A549 (cell line): ENCODE measurements at regions of chr7 and their contacts with region 1.

Region 1: DNA sequence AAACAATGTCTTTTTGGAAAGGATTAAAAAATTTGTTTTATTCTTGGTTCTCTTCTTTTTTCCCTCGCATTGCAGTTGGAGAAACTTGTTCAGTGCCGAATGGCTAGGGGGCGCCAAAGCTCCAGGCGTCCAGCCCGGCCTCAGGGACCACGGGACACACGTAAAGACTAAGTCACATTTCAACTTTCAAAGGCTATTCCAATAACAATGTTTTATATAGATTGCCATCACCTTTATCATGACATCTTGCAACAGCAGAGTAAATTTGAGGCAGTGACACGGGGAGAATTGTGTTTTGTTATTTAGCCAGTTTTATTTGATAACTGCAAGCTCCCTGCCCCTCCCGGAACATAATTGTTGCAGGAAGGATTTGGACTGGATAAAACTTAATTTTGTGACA is 2.2 kb upstream of the IGFBP3 start:
- DNase-seq: peak in 1 of 2 experiments; percentile 81
- ATAC-seq: peak in 1 of 2 experiments; percentile 64; a peak in 3 of 6 replicates
- H3K4me3 ChIP-seq: peak overlapping the region; percentile 66; the same call in 2 of the 3 replicates
- H3K27ac ChIP-seq: peak overlapping the region; percentile 77 to 92
- H3K4me1 ChIP-seq: peaks cover 49% of the 10 kb centered on the region
- CTCF ChIP-seq: peak; percentile 95
- EP300 ChIP-seq: no peak
- POLR2A ChIP-seq: no peak
- RAD21 ChIP-seq: peak; percentile 99

Region 2: GRCh38 chr7:45863715-45864114 is 59.6 kb before region 1 on chr7:
- CTCF ChIA-PET with region 1: no interaction called
- POLR2A ChIA-PET with region 1: no interaction called
- DNase-seq: no peak
- ATAC-seq: peak; percentile 68 to 81; a peak in 4 of 6 replicates
- H3K4me3 ChIP-seq: no peak overlapping the region
- H3K27ac ChIP-seq: no peak overlapping the region
- H3K4me1 ChIP-seq: no peaks in the 10 kb centered on the region; the same call in 2 of the 3 replicates
- CTCF ChIP-seq: no peak
- EP300 ChIP-seq: no peak
- POLR2A ChIP-seq: no peak
- RAD21 ChIP-seq: peak in 1 of 2 experiments; percentile 12; a peak in 1 of 5 replicates

Region 3: GRCh38 chr7:45890902-45891461 is 32.3 kb before region 1 on chr7:
- CTCF ChIA-PET with region 1: interaction called, 51 read pairs
- POLR2A ChIA-PET with region 1: interaction called, 9 read pairs
- DNase-seq: peak in 1 of 2 experiments; percentile 38
- ATAC-seq: no peak
- H3K4me3 ChIP-seq: no peak overlapping the region
- H3K27ac ChIP-seq: peak overlapping the region in 1 of 2 experiments; percentile 86; a peak in 1 of 6 replicates
- H3K4me1 ChIP-seq: peaks cover 27% of the 10 kb centered on the region
- CTCF ChIP-seq: peak; percentile 87
- EP300 ChIP-seq: no peak
- POLR2A ChIP-seq: no peak
- RAD21 ChIP-seq: peak; percentile 81 to 87

Region 4: GRCh38 chr7:45969940-45970339 is 46.6 kb after region 1 on chr7:
- CTCF ChIA-PET with region 1: interaction called, 57 read pairs
- POLR2A ChIA-PET with region 1: no interaction called
- DNase-seq: no peak
- ATAC-seq: no peak
- H3K4me3 ChIP-seq: no peak overlapping the region
- H3K27ac ChIP-seq: peak overlapping the region in 1 of 2 experiments; percentile 98; a peak in 3 of 6 replicates
- H3K4me1 ChIP-seq: peaks cover 18% of the 10 kb centered on the region
- CTCF ChIP-seq: no peak
- EP300 ChIP-seq: no peak
- POLR2A ChIP-seq: no peak
- RAD21 ChIP-seq: no peak

Region 5: DNA sequence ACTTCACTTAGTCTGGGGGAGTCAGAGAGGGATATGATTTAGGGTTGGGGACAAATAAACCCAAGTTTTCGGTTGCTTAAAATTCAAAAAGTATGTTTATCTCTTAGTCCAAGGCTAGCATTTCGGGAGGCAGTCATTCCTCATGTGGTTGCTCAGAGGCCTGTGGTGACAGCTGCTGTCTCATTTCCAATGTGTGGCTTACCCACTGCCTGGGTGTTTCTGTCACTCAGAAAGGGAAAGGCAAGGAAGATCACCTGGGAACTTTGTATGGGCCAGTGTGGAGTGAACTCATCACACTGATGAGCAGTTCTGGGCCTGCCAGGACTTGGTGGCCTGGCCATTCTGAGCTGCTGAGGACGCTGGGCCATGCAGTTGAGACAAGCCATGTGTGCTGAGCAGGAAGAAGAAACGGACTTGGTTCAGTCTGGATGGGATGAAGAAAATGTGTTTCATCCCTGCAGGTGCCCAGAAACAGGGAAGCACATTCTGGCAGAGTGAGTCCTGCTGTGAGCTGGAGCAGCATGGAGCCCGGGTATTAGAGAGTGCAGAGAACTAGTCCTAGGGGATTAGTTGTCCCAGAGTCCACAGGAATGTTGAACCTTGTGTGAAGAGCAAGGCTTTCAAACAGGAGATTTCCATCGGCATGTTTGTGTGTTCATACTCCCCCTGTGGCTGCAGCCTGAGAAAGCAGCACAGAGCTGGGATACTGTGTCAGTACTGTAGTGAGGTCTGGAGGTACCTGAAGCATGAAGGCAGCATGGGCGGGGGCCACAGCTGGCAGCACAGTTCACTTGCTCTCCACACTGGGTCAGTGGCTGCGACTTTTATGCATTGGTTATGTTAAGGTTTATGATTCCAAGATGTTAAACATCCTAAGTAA is 208.9 kb after region 1 on chr7:
- CTCF ChIA-PET with region 1: interaction called, 30 read pairs
- POLR2A ChIA-PET with region 1: no interaction called
- DNase-seq: peak in 1 of 2 experiments; percentile 40
- ATAC-seq: peak; percentile 87 to 93
- H3K4me3 ChIP-seq: no peak overlapping the region
- H3K27ac ChIP-seq: peak overlapping the region in 1 of 2 experiments; percentile 59; a peak in 3 of 6 replicates
- H3K4me1 ChIP-seq: no peaks in the 10 kb centered on the region
- CTCF ChIP-seq: 0 out of 3 replicates have a peak, but pooled peaks have one; percentile 21
- EP300 ChIP-seq: no peak
- POLR2A ChIP-seq: no peak
- RAD21 ChIP-seq: peak in 1 of 2 experiments; percentile 42; a peak in 2 of 5 replicates

Region 6: DNA sequence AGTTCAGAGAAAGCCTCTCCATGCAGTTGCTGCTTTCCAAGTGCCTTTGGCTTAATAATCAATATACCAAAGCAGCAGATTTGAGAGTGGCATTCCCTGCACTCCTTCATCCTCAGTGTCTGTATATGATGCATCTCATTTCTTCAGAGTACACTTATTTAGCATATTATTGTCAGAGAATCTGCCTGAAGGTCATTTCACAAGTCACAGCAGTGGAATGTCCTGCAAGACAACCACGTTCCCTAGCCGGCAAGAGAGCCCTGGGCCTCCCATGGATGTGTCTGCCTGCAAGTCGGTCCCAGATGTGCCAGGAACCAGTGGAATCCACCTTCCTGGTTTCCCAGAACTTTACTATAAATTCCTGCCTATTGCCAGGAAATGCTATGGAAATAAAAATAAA is 287.2 kb after region 1 on chr7:
- CTCF ChIA-PET with region 1: interaction called, 11 read pairs
- POLR2A ChIA-PET with region 1: no interaction called
- DNase-seq: no peak
- ATAC-seq: no peak
- H3K4me3 ChIP-seq: no peak overlapping the region
- H3K27ac ChIP-seq: no peak overlapping the region
- H3K4me1 ChIP-seq: peaks cover 7% of the 10 kb centered on the region; the same call in 1 of the 3 replicates
- CTCF ChIP-seq: no peak
- EP300 ChIP-seq: no peak
- POLR2A ChIP-seq: no peak
- RAD21 ChIP-seq: no peak

Region 7: DNA sequence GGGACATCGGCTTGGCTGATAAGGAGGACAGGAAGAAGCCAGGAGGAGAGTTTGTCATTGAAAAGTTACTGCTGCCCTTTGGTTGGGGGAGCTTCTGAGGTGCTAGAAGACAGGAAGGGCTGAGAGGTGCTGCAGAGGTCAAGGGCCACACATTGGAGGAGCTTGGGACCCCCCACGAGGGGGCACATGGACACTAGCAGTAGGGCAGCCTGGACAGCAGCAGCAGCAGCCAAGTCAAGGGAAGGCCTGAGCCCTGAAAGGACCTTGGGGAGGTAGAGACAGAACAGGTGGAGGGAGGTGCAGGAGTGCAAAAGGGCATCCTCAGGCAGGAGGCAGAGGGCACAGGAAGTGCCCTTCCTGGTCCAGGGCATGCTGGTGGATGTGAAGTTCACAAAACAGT is 437.5 kb after region 1 on chr7:
- CTCF ChIA-PET with region 1: interaction called, 98 read pairs
- POLR2A ChIA-PET with region 1: no interaction called
- DNase-seq: no peak
- ATAC-seq: 0 out of 6 replicates have a peak, but pooled peaks of 1 of the 2 experiments have one; percentile 30
- H3K4me3 ChIP-seq: no peak overlapping the region
- H3K27ac ChIP-seq: peak overlapping the region in 1 of 2 experiments; percentile 45; a peak in 2 of 6 replicates
- H3K4me1 ChIP-seq: peaks cover 20% of the 10 kb centered on the region
- CTCF ChIP-seq: no peak
- EP300 ChIP-seq: no peak
- POLR2A ChIP-seq: no peak
- RAD21 ChIP-seq: peak; percentile 14 to 17; a peak in 2 of 5 replicates